ENCODE measurements at regions of chr13 and their contacts with region 1.

Region 1: GRCh38 chr13:20495082-20496023 is 30.3 kb downstream of the CRYL1 start:
- DNase-seq: peak; percentile 47 to 88 (median 67)
- H3K4me3 ChIP-seq: peak overlapping the region in 1 of 4 donors; percentile 21
- H3K27ac ChIP-seq: no peak overlapping the region
- H3K4me1 ChIP-seq: peaks cover 0 to 3% of the 10 kb centered on the region in 2 donors
- H3K27me3 ChIP-seq: no peaks in the 10 kb centered on the region
- CTCF ChIP-seq: peak; percentile 88 to 95 (median 92)
- POLR2A ChIP-seq: no peak

Region 2: DNA sequence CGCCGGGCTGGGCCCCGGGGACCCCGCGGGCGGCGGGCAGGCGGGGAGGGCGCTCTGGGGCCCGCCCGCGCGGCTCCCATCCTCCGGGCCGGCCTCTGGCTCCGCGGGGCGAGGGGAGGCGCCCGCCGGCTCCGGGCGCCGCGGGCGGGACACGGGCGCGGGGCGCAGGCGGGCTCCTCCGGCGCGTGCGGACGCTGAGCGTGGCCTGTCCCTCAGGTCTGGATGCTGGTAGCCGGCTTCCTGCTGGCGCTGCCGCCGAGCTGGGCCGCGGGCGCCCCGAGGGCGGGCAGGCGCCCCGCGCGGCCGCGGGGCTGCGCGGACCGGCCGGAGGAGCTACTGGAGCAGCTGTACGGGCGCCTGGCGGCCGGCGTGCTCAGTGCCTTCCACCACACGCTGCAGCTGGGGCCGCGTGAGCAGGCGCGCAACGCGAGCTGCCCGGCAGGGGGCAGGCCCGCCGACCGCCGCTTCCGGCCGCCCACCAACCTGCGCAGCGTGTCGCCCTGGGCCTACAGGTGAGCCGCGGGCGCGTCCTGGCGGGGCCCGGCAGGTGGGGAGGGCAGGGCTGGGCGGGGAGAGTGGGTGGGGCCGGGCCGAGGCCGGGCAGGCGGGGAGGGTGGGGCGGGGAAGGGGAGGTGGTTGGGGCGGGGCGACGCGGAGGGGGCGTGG is 208.6 kb after region 1 on chr13:
- intact Hi-C with region 1: loop called in 1 of 2 experiments (anchors 10 kb)
- DNase-seq: peak; percentile 73 to 85 (median 77)
- H3K4me3 ChIP-seq: peak overlapping the region in 2 of 4 donors; percentile 2 to 85
- H3K27ac ChIP-seq: peak overlapping the region in 3 of 5 donors; percentile 44 to 87 (median 46)
- H3K4me1 ChIP-seq: peaks cover 0 to 13% of the 10 kb centered on the region in 2 donors
- H3K27me3 ChIP-seq: no peaks in the 10 kb centered on the region
- CTCF ChIP-seq: peak in 3 of 6 experiments; percentile 47 to 86 (median 75)
- POLR2A ChIP-seq: peak; percentile 45 to 77

Region 3: DNA sequence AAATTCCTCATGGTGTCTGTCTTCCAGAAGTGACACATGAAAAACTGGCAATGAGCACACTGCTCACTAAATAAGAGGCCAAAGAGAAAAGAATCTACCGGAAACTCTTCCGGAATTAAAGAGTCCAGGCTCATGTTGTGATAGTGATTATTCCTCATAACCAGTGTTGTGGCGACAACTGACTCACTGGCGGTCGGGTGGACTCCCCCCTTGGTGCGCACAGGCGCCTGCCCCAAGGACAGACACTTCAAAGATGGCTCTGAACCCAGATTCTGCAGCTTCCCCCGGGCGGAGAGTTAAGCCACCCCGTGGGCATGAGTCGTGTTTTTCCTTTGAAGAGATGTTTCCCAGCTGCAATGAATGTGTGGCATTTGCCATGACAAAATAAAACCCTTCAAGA is 218.4 kb after region 1 on chr13:
- intact Hi-C with region 1: loop called (anchors 10 kb)
- DNase-seq: peak in 5 of 7 donors; percentile 54 to 79 (median 69)
- H3K4me3 ChIP-seq: no peak overlapping the region
- H3K27ac ChIP-seq: peak overlapping the region in 2 of 5 donors; percentile 50 to 62
- H3K4me1 ChIP-seq: peaks cover 5 to 24% of the 10 kb centered on the region in 2 donors
- H3K27me3 ChIP-seq: no peaks in the 10 kb centered on the region
- CTCF ChIP-seq: no peak
- POLR2A ChIP-seq: peak in 1 of 2 donors; percentile 15

Region 4: GRCh38 chr13:20828539-20829364 is 333.4 kb after region 1 on chr13:
- intact Hi-C with region 1: loop called in 1 of 2 experiments (anchors 10 kb)
- DNase-seq: peak in 5 of 7 donors; percentile 32 to 52 (median 42)
- H3K4me3 ChIP-seq: peak overlapping the region in 1 of 4 donors; percentile 46
- H3K27ac ChIP-seq: peak overlapping the region in 2 of 5 donors; percentile 7 to 46
- H3K4me1 ChIP-seq: no peaks in the 10 kb centered on the region
- H3K27me3 ChIP-seq: no peaks in the 10 kb centered on the region
- CTCF ChIP-seq: peak; percentile 73 to 91 (median 80)
- POLR2A ChIP-seq: no peak

Region 5: DNA sequence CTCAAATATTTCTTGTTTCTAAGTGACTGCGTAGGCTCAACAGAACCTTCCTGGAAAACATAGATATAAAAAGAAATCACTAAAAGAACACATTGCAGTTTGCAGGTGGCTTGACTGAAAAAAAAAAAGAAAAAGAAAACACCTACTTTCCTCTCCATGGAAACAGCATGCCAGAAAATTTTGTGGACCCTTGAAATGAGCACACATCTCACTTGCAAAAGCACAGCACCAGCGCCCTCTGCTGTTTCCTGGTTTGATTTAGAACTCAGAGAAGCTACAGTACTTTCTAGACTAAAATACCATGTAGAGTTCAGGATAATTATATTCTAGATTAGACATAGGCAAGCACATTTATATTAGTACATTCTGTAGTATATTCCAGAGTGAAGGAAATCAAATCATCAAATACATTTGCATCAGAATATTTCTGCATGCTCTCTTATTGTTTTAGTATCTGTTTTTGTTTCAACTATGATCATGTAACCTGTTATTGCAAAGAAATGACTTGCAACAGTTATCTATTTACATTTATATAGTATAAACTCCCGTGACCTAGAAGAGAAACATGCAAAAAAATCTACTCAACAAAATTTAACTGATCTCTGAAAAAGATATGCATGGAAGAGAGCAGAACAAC is 429.5 kb after region 1 on chr13:
- intact Hi-C with region 1: loop called (anchors 2 to 10 kb)
- DNase-seq: peak; percentile 66 to 91 (median 84)
- H3K4me3 ChIP-seq: no peak overlapping the region
- H3K27ac ChIP-seq: no peak overlapping the region
- H3K4me1 ChIP-seq: no peaks in the 10 kb centered on the region
- H3K27me3 ChIP-seq: no peaks in the 10 kb centered on the region
- CTCF ChIP-seq: peak; percentile 50 to 84 (median 67)
- POLR2A ChIP-seq: no peak

Measured in adrenal gland (tissue), 19 donors.